ENCODE measurements at regions of chr16 and their contacts with region 1.

Region 1: GRCh38 chr16:30534368-30535105 is at the start of gene ZNF747:
- DNase-seq: peak; percentile 85
- ATAC-seq: peak; percentile 83
- H3K4me3 Mint-ChIP-seq: peak within 1 kb of the TSS; percentile 96
- H3K27ac Mint-ChIP-seq: peak within 1 kb of the TSS; percentile 97
- H3K4me1 Mint-ChIP-seq: peaks cover 23% of the 10 kb centered on the region
- H3K27me3 Mint-ChIP-seq: no peaks in the 10 kb centered on the region
- CTCF ChIP-seq: no peak
- total RNA-seq, gene ZNF747: 16.3 and 21.6 TPM in 2 replicates

Region 2: DNA sequence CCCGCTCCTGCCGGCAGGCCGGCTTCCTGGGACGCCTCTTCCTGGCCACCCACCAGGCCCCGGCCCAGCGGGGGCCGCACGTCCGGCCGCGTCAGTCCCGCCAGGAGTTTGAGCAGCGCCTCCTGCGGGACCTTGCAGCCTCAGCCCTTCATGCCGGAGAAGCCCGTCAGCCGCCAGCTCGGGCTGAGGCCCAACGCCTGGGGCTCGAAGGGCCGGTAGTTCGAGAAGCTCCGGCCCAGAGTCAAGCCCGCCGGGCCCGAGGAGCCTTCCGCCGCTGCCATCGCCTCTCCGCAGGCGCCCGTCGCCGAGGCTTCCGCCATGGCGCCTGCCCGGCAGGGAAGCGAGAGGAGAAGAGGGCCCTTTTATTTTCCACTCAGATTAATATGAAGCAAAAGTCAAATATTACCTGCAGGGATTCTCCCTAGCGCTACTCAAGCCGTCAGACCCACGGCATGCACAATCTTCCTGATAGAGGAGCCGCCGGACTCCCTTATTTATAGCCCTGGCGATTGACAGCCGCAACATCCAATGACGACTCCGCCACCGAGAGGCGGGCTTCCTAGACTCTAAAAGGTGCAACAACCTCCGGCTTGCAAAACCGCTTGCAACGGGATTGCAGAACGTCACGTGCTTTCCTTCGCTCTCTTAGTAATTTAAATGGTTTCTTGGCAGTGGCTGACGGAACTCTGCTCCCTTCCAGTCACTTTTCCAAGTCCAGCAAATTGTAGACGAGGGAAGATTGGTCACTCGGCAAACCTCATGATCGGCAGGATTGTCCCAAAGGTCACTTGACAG is 88.9 kb before region 1 on chr16 and contains the start of gene SEPHS2:
- CTCF ChIA-PET with region 1: interaction called, 21 read pairs
- POLR2A ChIA-PET with region 1: interaction called, 38 read pairs
- intact Hi-C with region 1: loop called (anchors 1 kb)
- DNase-seq: peak; percentile 87
- ATAC-seq: peak; percentile 96
- H3K4me3 Mint-ChIP-seq: peak within 1 kb of the TSS; percentile 95
- H3K27ac Mint-ChIP-seq: peak within 1 kb of the TSS; percentile 96
- H3K4me1 Mint-ChIP-seq: peaks cover 45% of the 10 kb centered on the region
- H3K27me3 Mint-ChIP-seq: no peaks in the 10 kb centered on the region
- CTCF ChIP-seq: no peak
- total RNA-seq, gene SEPHS2: 79.1 and 80.0 TPM in 2 replicates

Region 3: DNA sequence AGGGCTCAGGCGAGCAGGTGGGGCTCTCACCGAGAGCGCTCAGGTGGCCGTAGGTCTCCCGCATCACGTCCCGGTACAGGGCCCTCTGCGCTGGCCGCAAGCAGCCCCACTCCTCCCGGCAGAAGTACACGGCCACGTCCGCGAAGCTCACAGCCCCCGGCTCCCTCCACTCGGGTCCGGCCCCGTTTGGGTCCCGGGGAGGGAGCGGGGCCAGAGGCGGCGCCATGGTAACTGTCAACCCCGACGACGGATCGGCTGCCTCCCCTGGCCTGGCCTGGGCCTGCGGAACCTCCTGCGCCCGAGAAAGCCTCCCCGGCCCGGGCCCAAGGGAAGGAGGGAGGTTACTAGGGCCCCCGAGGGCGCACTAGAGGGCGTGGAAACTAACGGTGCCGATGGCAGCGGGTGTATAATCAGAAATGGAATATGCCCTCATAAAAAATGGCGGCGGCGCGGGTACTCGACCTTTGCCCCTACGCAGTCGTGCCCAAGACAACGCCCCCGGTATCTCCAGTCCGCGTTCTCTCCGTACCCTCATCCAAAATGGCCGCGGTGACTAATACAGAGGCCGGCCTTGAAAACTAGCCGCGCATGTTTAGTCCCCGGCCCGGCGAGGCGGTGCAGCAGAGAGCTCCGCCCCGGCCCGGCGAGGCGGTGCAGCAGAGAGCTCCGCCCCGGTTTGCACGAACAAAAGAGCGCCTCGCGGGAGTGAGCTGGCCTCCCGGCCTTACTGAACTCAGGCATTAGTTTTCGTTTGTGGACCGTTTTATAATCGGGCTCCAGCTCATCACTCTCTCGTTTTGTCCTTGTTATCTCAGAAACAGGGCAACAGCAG is 23.6 kb after region 1 on chr16 and contains the start of gene ZNF764:
- CTCF ChIA-PET with region 1: interaction called, 16 read pairs
- POLR2A ChIA-PET with region 1: interaction called, 135 read pairs
- intact Hi-C with region 1: loop called (anchors 1 kb)
- DNase-seq: peak; percentile 91
- ATAC-seq: peak; percentile 93
- H3K4me3 Mint-ChIP-seq: peak within 1 kb of the TSS; percentile 83
- H3K27ac Mint-ChIP-seq: peak within 1 kb of the TSS; percentile 84
- H3K4me1 Mint-ChIP-seq: peaks cover 43% of the 10 kb centered on the region
- H3K27me3 Mint-ChIP-seq: no peaks in the 10 kb centered on the region
- CTCF ChIP-seq: no peak
- total RNA-seq, gene ZNF764: 16.1 and 19.2 TPM in 2 replicates

Region 4: DNA sequence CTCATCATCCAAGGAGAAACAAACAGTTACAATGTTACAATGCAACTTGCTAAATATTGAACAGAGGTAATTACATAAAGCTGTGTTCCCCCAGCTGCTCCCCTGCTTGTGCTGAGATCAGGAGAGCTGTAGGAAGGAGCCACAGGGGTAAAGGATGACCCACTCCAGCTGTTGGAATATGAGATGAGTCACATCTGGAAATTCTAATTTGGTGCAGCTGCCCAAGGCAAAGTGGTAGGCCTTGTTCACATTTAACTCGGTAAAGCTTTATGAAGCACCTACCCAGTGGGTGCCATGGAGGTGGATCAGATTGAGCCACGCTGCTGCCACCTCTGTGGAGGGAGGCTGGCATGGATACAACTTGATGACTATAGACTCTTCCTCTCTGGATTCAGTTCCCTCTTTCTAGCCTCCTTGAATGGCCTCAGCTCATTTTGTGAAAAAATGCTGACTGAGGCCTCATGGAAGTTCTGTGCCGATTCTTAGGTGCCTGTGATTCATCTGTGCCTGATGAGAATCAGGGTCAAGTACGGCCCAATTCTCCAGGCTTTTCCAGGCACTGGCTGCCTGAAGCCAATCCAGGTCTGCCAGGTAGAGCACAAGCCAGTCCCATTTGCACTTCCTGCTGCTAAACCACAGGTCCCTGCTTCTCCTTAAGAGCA is 68.2 kb after region 1 on chr16:
- CTCF ChIA-PET with region 1: interaction called, 13 read pairs
- POLR2A ChIA-PET with region 1: interaction called, 4 read pairs
- intact Hi-C with region 1: loop called (anchors 1 kb)
- DNase-seq: no peak
- ATAC-seq: no peak
- H3K4me3 Mint-ChIP-seq: no peak overlapping the region
- H3K27ac Mint-ChIP-seq: no peak overlapping the region
- H3K4me1 Mint-ChIP-seq: peaks cover 3% of the 10 kb centered on the region
- H3K27me3 Mint-ChIP-seq: no peaks in the 10 kb centered on the region
- CTCF ChIP-seq: no peak

Measured in activated B cell treated with CpG ODN at 0.5 μM for 24 hours (primary cell).